Activated CD4-positive, alpha-beta memory T cell treated with anti-CD3 and anti-CD28 coated beads for 36 hours (primary cell): ENCODE measurements at regions of chr19 and their contacts with region 1.

Region 1: DNA sequence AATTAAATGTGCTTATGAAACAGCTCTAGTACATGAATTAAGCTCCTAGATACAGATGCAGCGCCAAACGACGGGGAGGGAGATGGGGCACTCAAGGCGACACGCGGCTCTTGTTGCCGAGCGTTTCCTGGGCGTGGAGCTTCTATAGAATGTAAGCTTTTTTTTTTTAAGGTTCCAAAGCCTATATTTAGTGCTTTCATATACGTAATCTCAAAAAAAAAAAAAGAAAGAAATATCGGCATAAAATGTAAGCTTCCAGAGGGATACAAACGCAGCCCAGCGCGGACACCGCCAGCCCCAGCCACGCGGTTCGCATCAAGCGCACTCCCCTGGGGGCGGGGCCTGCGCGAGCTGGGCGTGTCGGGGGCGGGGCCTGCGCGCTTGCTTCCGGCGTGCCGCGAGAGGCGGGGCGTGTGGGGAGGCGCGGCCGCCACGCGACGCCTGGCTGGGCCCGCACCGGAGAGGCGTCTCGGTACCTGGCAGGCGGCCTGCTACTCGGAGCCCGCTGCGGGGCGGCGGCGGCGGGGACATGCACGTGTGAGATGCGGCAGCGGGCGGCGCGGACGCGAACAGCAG is at the start of gene URI1:
- DNase-seq: peak; percentile 95
- H3K4me3 Mint-ChIP-seq: peak within 1 kb of the TSS; percentile 98
- H3K27ac Mint-ChIP-seq: peak within 1 kb of the TSS; percentile 94
- H3K4me1 Mint-ChIP-seq: peaks cover 36% of the 10 kb centered on the region
- H3K27me3 Mint-ChIP-seq: no peaks in the 10 kb centered on the region
- total RNA-seq, gene URI1: 66.9 to 68.5 TPM

Region 2: DNA sequence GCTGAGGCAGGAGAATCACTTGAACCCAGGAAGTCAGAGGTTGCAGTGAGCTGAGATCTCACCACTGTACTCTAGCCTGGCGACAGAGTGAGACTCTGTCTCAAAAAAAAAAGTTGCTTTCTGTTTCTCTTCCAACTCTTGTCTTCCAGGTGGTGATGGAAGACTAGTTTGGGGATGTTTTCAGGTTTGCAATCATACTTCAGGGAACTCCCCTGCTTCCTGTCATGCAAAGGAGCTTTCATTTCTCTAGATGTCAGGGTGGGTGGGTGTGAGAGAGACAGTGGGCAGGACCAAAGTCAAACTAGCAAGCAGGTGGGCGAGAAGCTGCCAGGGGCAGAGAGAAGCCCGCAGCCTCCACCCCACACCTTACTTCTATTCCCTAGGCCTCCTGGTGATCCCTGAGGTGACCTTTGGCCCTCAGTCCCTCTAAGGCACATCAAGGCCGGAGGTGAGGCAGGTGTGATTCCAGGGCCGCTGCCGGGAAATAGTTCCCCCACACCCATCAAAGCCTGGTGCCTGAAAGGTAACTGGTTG is 104.4 kb before region 1 on chr19:
- CTCF ChIA-PET with region 1: no interaction called
- POLR2A ChIA-PET with region 1: no interaction called
- intact Hi-C with region 1: loop called (anchors 2 kb)
- DNase-seq: peak; percentile 75
- H3K4me3 Mint-ChIP-seq: peak overlapping the region; percentile 55
- H3K27ac Mint-ChIP-seq: peak overlapping the region; percentile 93
- H3K4me1 Mint-ChIP-seq: peaks cover 46% of the 10 kb centered on the region
- H3K27me3 Mint-ChIP-seq: no peaks in the 10 kb centered on the region

Region 3: DNA sequence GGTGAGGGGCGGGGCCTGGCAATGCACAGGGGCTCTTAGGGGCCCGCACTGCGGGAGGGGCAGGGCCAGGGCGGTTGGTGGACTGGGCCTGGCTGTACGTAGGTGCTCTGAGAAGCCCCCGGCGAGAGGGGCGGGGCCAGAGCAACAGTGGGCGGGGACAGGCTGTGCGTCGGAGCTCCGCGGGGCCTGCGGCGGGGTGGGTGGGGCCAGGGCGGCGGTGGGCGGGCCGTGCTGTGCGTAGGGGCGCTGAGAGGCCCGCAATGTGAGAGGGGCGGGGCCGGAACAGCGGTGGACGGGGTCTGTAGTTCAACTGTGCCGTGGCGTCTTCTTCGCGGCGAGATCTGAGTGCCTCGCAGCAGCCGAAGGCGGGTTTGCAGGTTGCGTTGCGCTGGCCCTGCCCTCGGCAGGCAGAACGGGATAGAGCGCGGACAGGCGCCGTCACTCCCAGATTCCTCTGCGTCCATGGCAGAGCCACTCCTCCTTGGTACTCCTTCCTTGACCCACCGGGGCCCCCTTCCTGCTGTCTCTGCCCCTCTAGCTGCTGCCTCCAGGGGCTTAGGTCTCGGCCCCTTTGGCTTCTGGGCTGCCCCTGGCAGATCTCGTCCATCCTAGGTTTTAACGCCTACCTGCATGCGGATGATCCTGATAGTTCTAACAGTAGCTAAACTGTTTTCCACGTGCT is 96.9 kb before region 1 on chr19:
- CTCF ChIA-PET with region 1: interaction called, 3 read pairs
- POLR2A ChIA-PET with region 1: interaction called, 3 read pairs
- intact Hi-C with region 1: loop called (anchors 2 kb)
- DNase-seq: peak; percentile 96
- H3K4me3 Mint-ChIP-seq: peak overlapping the region; percentile 81
- H3K27ac Mint-ChIP-seq: peak overlapping the region; percentile 85
- H3K4me1 Mint-ChIP-seq: peaks cover 9% of the 10 kb centered on the region
- H3K27me3 Mint-ChIP-seq: no peaks in the 10 kb centered on the region

Region 4: GRCh38 chr19:29966588-29967249 is 24.8 kb after region 1 on chr19:
- CTCF ChIA-PET with region 1: interaction called, 11 read pairs
- POLR2A ChIA-PET with region 1: no interaction called
- intact Hi-C with region 1: no loop called
- DNase-seq: no peak
- H3K4me3 Mint-ChIP-seq: no peak overlapping the region
- H3K27ac Mint-ChIP-seq: no peak overlapping the region
- H3K4me1 Mint-ChIP-seq: peaks cover 72% of the 10 kb centered on the region
- H3K27me3 Mint-ChIP-seq: no peaks in the 10 kb centered on the region

Region 5: DNA sequence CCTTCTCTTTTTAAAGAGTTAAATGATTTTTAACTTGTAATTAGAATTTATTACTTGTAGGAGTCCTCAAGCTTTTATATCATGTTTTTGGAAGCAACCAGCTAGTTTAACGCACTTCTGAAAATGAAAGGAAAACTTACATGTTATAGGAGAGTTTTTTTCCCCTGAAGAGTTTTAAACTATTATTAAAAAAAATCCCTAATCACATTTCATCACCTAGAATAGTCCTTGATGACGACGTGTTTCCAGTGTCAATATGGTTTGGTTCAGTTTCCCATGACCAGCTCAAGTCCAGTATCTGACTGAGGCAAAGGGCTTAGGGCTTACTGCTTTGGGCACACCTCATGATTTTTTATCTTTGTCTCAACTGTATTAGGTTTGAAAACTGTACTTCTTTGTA is 36.2 kb after region 1 on chr19:
- CTCF ChIA-PET with region 1: no interaction called
- POLR2A ChIA-PET with region 1: interaction called, 3 read pairs
- intact Hi-C with region 1: loop called (anchors 5 kb)
- DNase-seq: no peak
- H3K4me3 Mint-ChIP-seq: no peak overlapping the region
- H3K27ac Mint-ChIP-seq: no peak overlapping the region
- H3K4me1 Mint-ChIP-seq: peaks cover 45% of the 10 kb centered on the region
- H3K27me3 Mint-ChIP-seq: no peaks in the 10 kb centered on the region

Region 6: DNA sequence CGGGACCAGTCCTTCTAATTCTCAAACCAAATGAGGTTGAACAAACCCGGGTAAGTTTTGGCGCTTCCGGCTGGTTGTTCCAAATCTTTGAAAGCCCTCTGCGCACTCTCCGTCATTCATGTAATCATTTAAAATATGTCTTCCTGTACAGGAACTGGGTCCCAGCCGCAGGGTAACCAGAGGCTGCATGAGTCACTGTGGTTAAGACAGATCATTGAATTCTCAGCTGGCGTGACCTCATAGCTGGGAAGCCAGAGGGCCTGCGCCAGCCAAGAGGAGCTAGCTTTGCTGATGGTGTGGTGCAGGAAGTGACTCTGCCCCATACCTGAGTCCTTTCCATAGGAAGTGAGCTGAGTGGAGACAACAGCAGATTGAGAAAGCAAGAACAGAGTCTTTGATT is 1272.2 kb after region 1 on chr19:
- CTCF ChIA-PET with region 1: no interaction called
- POLR2A ChIA-PET with region 1: no interaction called
- intact Hi-C with region 1: loop called (anchors 10 kb)
- DNase-seq: peak; percentile 96
- H3K4me3 Mint-ChIP-seq: peak overlapping the region; percentile 69
- H3K27ac Mint-ChIP-seq: peak overlapping the region; percentile 99
- H3K4me1 Mint-ChIP-seq: peaks cover 26% of the 10 kb centered on the region
- H3K27me3 Mint-ChIP-seq: peaks cover 3% of the 10 kb centered on the region